Psoas muscle (tissue), 8 donors: ENCODE measurements at regions of chr20 and their contacts with region 1.

Region 1: DNA sequence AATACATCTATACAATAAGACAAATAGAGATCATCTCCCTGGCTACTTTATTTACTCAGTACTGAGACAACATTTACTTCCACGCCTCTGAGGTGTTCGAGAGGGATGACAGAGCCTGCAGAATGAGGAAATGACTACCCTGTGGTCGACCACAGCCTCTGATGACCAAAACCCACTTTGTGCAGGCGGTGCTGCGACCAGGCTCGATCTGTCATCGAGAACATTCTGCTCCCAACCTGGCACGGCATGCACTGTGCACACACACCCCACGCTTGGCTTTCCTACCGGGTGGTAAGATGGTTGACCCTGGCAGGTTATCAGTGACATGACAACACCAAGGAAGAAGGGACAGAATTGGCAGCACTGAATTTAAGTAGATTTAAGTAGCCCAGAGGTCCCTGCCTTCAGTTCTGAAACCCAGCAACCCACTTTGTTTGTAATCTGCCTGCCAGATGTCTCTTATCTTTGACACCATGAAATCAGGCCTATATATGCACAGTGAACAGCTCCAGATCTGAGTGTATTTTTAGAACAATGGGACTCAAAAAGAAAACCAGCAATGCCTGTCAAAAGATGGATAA is 42.6 kb downstream of the TTI1 start:
- DNase-seq: peak; percentile 71 to 82
- ATAC-seq: peak; percentile 26 to 75 (median 54)
- H3K4me3 ChIP-seq: no peak overlapping the region
- H3K27ac ChIP-seq: peak overlapping the region; percentile 91
- H3K4me1 ChIP-seq: peaks cover 90% of the 10 kb centered on the region
- H3K27me3 ChIP-seq: no peaks in the 10 kb centered on the region
- CTCF ChIP-seq: no peak

Region 2: DNA sequence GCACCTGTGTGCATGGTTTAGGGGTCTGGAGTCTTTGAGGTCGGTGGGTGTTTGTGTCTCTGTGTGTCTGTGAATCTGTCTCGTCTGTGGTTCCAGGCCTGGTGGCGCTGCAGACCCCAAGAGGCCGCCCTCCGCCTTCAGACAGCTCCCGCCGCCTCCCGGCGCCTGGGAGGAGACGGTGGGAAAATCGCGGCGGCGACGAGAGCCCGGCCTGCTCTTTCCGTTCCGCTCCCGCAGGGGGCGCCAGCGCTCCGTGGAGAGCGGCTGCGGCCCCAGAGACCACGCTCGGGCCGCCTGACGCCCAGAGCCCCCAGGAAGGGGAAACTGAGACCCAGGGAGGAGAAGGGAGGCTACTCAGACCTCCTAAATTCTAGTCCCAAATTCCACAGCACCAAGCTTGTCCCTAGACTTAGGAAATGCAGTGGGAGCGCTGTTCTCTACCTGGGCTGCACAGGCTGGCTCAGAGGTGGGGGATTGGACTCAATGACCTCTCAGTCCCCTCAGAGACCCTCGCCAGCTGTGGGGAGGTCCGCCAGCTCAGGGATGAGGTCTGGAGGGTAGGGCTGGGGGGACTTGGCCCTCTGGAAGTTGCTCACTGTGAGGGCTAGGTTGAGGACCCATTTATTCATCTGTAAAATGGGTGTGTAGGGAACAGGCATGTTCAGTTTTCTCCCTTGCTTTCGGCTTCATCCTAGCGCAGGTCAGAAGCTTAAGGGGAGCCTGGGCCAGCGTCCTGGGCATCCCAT is 426.1 kb before region 1 on chr20:
- intact Hi-C with region 1: loop called (anchors 5 to 10 kb)
- DNase-seq: peak; percentile 37 to 66
- ATAC-seq: peak; percentile 72 to 91 (median 82)
- H3K4me3 ChIP-seq: no peak overlapping the region
- H3K27ac ChIP-seq: no peak overlapping the region
- H3K4me1 ChIP-seq: no peaks in the 10 kb centered on the region
- H3K27me3 ChIP-seq: peaks cover 0 to 44% (median 8%) of the 10 kb centered on the region in 3 donors
- CTCF ChIP-seq: peak; percentile 89

Region 3: GRCh38 chr20:37758332-37758731 is 232.3 kb before region 1 on chr20:
- intact Hi-C with region 1: loop called (anchors 1 to 10 kb)
- DNase-seq: no peak
- ATAC-seq: peak in 1 of 4 donors; percentile 25
- H3K4me3 ChIP-seq: no peak overlapping the region
- H3K27ac ChIP-seq: no peak overlapping the region
- H3K4me1 ChIP-seq: peaks cover 11% of the 10 kb centered on the region
- H3K27me3 ChIP-seq: no peaks in the 10 kb centered on the region
- CTCF ChIP-seq: no peak

Region 4: GRCh38 chr20:37777012-37777950 is 213.4 kb before region 1 on chr20:
- intact Hi-C with region 1: loop called (anchors 5 kb)
- DNase-seq: no peak
- ATAC-seq: no peak
- H3K4me3 ChIP-seq: no peak overlapping the region
- H3K27ac ChIP-seq: no peak overlapping the region
- H3K4me1 ChIP-seq: peaks cover 41% of the 10 kb centered on the region
- H3K27me3 ChIP-seq: no peaks in the 10 kb centered on the region
- CTCF ChIP-seq: no peak

Region 5: GRCh38 chr20:37796121-37796520 is 194.5 kb before region 1 on chr20:
- intact Hi-C with region 1: no loop called
- DNase-seq: no peak
- ATAC-seq: no peak
- H3K4me3 ChIP-seq: no peak overlapping the region
- H3K27ac ChIP-seq: no peak overlapping the region
- H3K4me1 ChIP-seq: no peaks in the 10 kb centered on the region
- H3K27me3 ChIP-seq: no peaks in the 10 kb centered on the region
- CTCF ChIP-seq: no peak

Region 6: DNA sequence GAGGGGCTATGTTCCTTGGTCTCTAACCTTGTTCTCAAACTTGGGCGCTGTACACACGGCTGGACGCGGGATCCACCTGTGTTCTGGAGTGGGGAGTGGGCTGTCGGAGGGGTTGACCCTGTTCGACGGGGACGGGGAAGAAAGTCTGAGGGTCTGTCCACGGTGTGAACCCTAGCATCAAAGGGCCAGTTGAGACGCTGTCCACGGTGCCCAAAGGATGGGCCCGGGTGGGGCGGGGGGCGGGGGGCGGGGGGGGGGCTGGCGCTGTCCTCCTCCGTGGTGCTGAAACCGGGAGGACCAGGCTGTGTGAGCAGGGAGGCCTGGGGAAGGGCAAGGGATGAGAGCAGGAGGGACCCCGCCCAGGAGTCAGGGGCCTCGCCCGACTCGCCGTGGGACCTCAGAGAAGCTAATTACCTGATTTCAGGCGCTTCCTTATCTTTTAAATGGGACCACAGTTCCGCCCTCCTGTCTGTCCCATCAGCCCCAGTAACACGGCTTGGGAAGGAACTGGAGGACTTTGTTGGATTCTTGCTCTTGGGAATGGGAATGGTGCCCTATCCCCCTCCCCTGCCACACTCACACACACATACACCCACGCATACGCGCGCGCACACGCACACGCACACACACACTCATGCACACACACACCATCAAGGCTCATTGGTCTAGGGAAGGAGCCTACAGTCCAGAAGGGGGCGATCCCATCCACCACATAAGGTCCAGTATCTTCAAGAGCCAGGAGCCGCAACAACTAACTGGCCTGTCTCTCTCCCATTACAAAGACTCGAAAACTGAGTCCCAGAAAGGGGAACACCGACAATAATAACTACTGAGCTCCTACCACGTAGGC is 88.8 kb before region 1 on chr20:
- intact Hi-C with region 1: loop called (anchors 1 to 5 kb)
- DNase-seq: no peak
- ATAC-seq: peak; percentile 42 to 77 (median 64)
- H3K4me3 ChIP-seq: peak overlapping the region; percentile 62
- H3K27ac ChIP-seq: no peak overlapping the region
- H3K4me1 ChIP-seq: peaks cover 6% of the 10 kb centered on the region
- H3K27me3 ChIP-seq: peaks cover 0 to 57% (median 31%) of the 10 kb centered on the region in 3 donors
- CTCF ChIP-seq: peak; percentile 34

Region 7: DNA sequence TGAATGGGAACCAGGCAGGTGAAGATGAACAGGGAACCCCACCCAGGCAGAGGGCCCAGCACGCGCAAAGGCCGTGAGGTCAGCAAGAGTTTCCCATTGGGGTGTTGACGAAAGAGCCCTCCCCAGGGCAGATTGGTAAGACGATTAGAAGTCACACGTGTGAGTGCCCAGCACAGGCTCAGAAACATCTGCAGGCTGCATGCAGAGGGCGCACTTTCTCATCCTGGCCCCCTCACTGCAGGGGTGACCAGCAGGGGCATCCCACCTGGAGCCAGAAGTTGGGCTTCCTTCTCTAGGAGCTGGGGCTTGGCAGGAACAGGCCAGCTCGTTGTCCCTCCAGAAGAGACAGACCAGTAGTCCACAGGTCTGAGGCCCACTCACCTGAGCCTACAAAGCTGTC is 49.3 kb before region 1 on chr20:
- intact Hi-C with region 1: no loop called
- DNase-seq: no peak
- ATAC-seq: no peak
- H3K4me3 ChIP-seq: no peak overlapping the region
- H3K27ac ChIP-seq: no peak overlapping the region
- H3K4me1 ChIP-seq: no peaks in the 10 kb centered on the region
- H3K27me3 ChIP-seq: peaks cover 0 to 2% (median 0%) of the 10 kb centered on the region in 3 donors
- CTCF ChIP-seq: no peak